ENCODE measurements at regions of chr2 and their contacts with region 1.

Region 1: DNA sequence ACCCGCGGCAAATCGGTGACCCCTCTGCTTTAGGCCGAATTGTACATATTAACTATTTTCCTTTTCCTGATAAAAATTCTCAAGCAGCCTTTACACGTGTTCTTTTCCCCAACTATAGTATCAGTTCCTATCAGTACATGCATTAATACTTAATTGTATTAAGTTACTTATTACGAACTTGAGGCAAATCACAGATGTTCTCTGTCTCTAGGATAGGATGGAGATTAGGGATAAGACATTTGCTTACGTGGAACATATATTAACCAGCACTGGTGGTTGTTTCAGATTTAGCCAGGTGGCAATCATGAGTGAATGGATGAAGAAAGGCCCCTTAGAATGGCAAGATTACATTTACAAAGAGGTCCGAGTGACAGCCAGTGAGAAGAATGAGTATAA is 675 bp downstream of the GEMIN6 start:
- DNase-seq: no peak
- H3K4me3 Mint-ChIP-seq: peak overlapping the region; percentile 100
- H3K27ac Mint-ChIP-seq: peak overlapping the region; percentile 100
- H3K4me1 Mint-ChIP-seq: peaks cover 16% of the 10 kb centered on the region
- H3K27me3 Mint-ChIP-seq: peaks cover 13% of the 10 kb centered on the region

Region 2: DNA sequence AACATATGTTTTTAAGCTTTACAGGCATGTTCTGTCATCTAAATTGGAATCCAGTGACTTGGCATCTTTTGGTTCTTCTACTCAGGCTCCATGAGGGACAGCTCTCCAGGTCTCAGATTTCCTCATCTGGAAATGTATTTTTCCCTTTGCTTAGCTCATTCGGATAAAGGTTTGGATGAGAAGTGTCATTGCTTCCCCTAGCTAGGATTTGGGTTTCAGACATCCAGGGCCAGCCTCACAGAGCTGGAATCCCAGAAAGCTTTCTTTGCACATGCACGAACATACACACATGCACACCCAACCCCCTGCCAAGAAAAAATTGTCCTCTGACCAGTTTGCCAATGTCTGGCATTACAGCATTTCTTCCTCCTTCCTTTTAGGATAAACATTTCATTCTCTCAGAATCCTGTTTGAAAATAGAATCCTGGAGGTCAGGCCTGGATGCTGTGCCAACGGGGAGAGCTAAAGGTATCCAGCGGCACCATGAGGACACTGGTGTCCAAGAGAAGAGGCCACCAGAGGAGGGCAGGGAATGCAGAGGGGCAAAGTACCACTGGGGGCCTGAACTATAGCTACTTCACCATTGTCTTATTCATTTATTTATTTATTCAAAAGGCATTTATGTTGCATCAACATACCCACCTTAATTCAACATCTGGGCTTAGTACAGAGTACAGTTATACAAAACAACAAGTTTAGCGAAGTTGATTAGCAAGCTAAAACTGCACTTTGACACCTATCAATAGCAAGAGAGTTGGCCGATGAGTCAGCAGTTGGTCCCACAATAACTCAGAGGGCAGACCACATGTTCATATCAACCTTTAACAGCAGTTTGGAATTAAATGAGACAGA is 303.7 kb before region 1 on chr2:
- intact Hi-C with region 1: no loop called
- DNase-seq: no peak
- H3K4me3 Mint-ChIP-seq: no peak overlapping the region
- H3K27ac Mint-ChIP-seq: peak overlapping the region; percentile 42
- H3K4me1 Mint-ChIP-seq: peaks cover 32% of the 10 kb centered on the region
- H3K27me3 Mint-ChIP-seq: peaks cover 9% of the 10 kb centered on the region

Region 3: GRCh38 chr2:38619458-38620164 is 159.1 kb before region 1 on chr2:
- intact Hi-C with region 1: no loop called
- DNase-seq: no peak
- H3K4me3 Mint-ChIP-seq: no peak overlapping the region
- H3K27ac Mint-ChIP-seq: no peak overlapping the region
- H3K4me1 Mint-ChIP-seq: peaks cover 31% of the 10 kb centered on the region
- H3K27me3 Mint-ChIP-seq: peaks cover 2% of the 10 kb centered on the region

Region 4: DNA sequence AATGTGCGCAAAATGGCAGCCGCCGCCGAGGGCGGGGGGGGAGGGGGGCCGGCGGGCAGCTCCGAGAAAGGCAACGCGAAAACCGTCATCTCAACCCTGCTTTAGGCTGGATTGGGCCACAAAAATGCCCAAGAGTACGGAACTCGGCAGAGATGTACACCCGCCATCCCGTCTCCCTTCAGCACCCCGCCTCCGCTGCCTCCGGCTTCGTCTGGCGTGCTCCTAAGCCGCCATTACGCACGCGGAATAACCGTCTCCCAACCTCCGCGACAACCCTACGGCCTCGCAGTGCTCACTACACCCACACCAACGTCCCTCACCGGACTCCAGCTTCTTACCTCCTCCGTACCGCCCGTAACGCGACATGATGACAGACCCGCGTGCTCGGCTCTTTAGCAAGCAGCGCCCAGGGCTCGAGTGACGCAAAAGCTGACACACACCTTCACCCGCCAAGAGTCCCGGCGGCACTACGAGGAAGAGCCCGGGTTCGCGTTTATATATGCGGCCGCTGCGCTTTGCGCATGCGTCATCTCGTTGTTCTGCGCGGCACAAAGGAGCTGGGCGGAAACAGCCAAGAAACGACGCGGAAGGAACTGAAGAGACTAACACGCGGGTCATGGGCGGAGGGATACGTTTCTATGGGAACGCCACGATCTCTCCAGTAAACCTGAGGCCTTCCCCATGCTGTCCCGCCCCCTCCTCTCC is 27.6 kb before region 1 on chr2 and contains the start of gene SRSF7:
- intact Hi-C with region 1: loop called (anchors 1 kb)
- DNase-seq: peak; percentile 96
- H3K4me3 Mint-ChIP-seq: peak within 1 kb of the TSS; percentile 98
- H3K27ac Mint-ChIP-seq: peak within 1 kb of the TSS; percentile 100
- H3K4me1 Mint-ChIP-seq: peaks cover 54% of the 10 kb centered on the region
- H3K27me3 Mint-ChIP-seq: no peaks in the 10 kb centered on the region
- total RNA-seq, gene SRSF7: 417 and 422 TPM in 2 replicates

Region 5: GRCh38 chr2:38763228-38763627 is 15.5 kb before region 1 on chr2:
- intact Hi-C with region 1: loop called (anchors 1 kb)
- DNase-seq: no peak
- H3K4me3 Mint-ChIP-seq: no peak overlapping the region
- H3K27ac Mint-ChIP-seq: no peak overlapping the region
- H3K4me1 Mint-ChIP-seq: peaks cover 8% of the 10 kb centered on the region
- H3K27me3 Mint-ChIP-seq: peaks cover 2% of the 10 kb centered on the region

Region 6: DNA sequence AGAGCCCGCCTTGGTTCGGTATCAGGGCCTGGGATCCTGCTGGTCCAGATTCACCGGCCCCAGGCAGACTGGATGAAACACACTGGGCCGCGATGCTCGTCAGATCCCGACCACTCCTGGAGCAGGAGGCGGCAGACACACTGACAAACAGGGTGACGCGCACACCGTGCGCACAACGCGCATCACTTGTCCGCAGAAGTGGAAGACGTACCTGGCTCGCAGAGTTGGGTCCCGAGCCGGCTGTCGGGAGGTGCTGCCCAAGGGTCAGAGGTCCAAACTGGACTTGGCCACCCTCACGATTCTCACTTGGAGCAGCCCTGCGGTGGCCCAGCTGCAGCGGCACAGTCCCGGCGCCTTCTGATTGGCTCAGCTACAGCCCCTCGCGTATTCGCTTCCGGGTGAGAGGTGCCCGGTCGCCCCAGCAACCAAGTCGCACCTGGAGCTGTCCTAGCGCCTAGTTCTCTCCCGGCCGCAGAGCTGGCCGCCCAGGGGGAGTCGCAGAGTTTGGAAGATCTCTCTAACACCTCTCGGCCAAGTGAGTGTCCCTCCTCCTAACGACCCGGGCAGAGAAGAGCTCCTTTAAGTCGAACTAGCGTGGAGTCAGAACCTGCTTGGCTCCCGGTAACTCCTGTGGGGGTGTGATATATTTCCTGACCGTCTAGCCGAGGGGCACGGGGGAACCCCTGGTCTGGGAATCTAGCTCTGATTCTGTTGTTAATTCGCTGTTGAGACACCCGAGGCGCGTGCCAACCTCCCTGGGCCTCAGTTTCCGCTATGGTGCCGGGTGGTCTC is 97.1 kb after region 1 on chr2 and contains the starts of genes DHX57 and MORN2:
- intact Hi-C with region 1: loop called (anchors 1 kb)
- DNase-seq: peak; percentile 78
- H3K4me3 Mint-ChIP-seq: peak within 1 kb of the TSS; percentile 99
- H3K27ac Mint-ChIP-seq: peak within 1 kb of the TSS; percentile 96
- H3K4me1 Mint-ChIP-seq: peaks cover 24% of the 10 kb centered on the region
- H3K27me3 Mint-ChIP-seq: no peaks in the 10 kb centered on the region
- total RNA-seq, gene DHX57: 18.6 and 20.3 TPM in 2 replicates
- total RNA-seq, gene MORN2: 4.9 and 5.3 TPM in 2 replicates